Head of caudate nucleus (tissue), 42 donors: ENCODE measurements at regions of chr22 and their contacts with region 1.

Region 1: GRCh38 chr22:36762687-36763260 is 13.1 kb downstream of the IFT27 start:
- DNase-seq: peak in 3 of 42 donors; percentile 13 to 43 (median 17)

Region 2: GRCh38 chr22:36546092-36546804 is 216.5 kb before region 1 on chr22:
- intact Hi-C with region 1: loop called (anchors 10 kb)
- DNase-seq: peak; percentile 29 to 78 (median 58)